Caco-2 (cell line): ENCODE measurements at regions of chr17 and their contacts with region 1.

Region 1: DNA sequence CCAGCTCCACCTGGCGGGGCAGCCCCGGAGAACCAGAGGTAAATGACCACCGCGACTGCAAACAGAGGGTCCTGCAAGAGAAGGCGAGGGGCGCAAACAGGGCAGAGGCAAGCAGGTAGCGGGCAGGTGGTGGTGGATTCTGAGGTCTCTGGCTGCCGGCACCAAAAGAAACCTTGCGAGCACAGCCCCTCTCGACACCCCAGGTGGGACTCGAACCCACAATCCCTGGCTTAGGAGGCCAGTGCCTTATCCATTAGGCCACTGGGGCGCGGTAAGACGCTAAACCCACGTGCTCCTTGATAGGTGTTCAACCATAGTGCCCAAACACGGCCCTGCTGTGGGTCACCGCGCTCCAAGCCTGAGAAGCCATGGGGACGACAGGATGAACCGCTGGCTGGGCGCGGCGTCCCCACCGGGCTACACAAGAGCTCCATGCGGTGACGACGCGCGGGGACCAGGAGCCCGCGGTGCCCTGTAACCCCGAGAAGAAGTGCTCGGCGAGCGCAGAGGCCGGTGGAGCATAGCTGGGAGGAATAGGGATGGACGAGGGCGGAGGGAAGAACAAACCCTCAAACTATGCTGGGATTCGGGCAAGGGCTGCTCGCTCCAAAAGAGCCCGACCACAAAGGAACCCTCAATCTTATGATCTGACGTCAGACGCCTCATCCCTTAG is 12.4 kb downstream of the ATP5PD start:
- DNase-seq: peak; percentile 95 to 96
- H3K4me3 ChIP-seq: peak overlapping the region; percentile 91
- H3K4me3 Mint-ChIP-seq: peak overlapping the region; percentile 94
- H3K27ac Mint-ChIP-seq: peak overlapping the region; percentile 98
- H3K4me1 ChIP-seq: no peaks in the 10 kb centered on the region
- H3K4me1 Mint-ChIP-seq: peaks cover 30% of the 10 kb centered on the region
- H3K27me3 ChIP-seq: no peaks in the 10 kb centered on the region
- H3K27me3 Mint-ChIP-seq: peaks cover 4% of the 10 kb centered on the region
- CTCF ChIP-seq: peak; percentile 14 to 17

Region 2: GRCh38 chr17:75012346-75013091 is 21.9 kb before region 1 on chr17 and contains the start of gene MRPL58:
- CTCF ChIA-PET with region 1: interaction called, 21 read pairs
- POLR2A ChIA-PET with region 1: interaction called, 29 read pairs
- intact Hi-C with region 1: loop called (anchors 2 kb)
- DNase-seq: peak; percentile 88 to 92
- H3K4me3 ChIP-seq: peak within 1 kb of the TSS; percentile 84
- H3K4me3 Mint-ChIP-seq: peak within 1 kb of the TSS; percentile 82
- H3K27ac Mint-ChIP-seq: peak within 1 kb of the TSS; percentile 84
- H3K4me1 ChIP-seq: peaks cover 3% of the 10 kb centered on the region; the same call in 1 of the 2 replicates
- H3K4me1 Mint-ChIP-seq: peaks cover 29% of the 10 kb centered on the region
- H3K27me3 ChIP-seq: no peaks in the 10 kb centered on the region
- H3K27me3 Mint-ChIP-seq: no peaks in the 10 kb centered on the region
- CTCF ChIP-seq: peak; percentile 68 to 79
- total RNA-seq, gene MRPL58: 61.0 and 61.8 TPM in 2 replicates

Region 3: DNA sequence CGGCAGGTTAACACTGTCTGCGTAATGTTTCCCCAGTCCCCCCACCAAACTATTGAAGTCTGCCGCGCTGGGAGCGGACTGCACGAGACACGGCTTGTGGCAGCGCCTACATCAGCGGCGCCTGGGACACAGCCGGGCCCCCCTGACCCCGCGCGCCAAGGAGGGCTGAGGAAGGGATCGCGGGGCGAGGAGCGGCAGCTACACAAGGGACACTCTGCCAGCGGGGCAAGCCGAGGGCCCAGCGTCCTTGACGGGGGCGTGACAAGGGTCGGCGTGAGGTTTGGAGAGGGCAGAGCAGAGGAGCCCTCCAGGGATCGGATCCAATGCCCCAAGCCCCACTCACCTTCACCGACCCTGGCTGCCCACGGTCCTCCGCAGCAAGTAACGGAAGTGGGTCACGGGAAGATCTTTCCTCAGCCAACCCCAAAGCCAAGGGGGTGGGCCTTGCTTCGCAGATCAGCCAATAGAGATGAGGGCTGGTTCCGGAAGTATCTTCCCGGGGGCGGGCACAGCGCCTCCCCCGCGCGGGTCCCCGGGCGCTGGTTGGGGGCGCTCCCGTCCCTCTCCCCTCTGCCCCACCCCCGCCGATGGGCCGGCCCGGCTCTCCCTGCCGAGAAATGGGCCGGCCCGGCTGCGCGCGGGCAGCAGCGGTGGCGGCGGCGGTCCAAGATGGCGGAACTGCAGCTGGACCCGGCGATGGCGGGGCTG is 12.4 kb after region 1 on chr17 and contains the starts of genes ATP5PD and KCTD2:
- CTCF ChIA-PET with region 1: interaction called, 5 read pairs
- POLR2A ChIA-PET with region 1: interaction called, 20 read pairs
- intact Hi-C with region 1: loop called (anchors 1 kb)
- DNase-seq: peak; percentile 98 to 99
- H3K4me3 ChIP-seq: peak within 1 kb of the TSS; percentile 60
- H3K4me3 Mint-ChIP-seq: peak within 1 kb of the TSS; percentile 95
- H3K27ac Mint-ChIP-seq: peak within 1 kb of the TSS; percentile 98
- H3K4me1 ChIP-seq: peaks cover 7% of the 10 kb centered on the region; the same call in 1 of the 2 replicates
- H3K4me1 Mint-ChIP-seq: no peaks in the 10 kb centered on the region
- H3K27me3 ChIP-seq: no peaks in the 10 kb centered on the region
- H3K27me3 Mint-ChIP-seq: no peaks in the 10 kb centered on the region
- CTCF ChIP-seq: no peak
- total RNA-seq, gene ATP5PD: 316 and 326 TPM in 2 replicates
- total RNA-seq, gene KCTD2: 27.9 and 28.8 TPM in 2 replicates

Region 4: DNA sequence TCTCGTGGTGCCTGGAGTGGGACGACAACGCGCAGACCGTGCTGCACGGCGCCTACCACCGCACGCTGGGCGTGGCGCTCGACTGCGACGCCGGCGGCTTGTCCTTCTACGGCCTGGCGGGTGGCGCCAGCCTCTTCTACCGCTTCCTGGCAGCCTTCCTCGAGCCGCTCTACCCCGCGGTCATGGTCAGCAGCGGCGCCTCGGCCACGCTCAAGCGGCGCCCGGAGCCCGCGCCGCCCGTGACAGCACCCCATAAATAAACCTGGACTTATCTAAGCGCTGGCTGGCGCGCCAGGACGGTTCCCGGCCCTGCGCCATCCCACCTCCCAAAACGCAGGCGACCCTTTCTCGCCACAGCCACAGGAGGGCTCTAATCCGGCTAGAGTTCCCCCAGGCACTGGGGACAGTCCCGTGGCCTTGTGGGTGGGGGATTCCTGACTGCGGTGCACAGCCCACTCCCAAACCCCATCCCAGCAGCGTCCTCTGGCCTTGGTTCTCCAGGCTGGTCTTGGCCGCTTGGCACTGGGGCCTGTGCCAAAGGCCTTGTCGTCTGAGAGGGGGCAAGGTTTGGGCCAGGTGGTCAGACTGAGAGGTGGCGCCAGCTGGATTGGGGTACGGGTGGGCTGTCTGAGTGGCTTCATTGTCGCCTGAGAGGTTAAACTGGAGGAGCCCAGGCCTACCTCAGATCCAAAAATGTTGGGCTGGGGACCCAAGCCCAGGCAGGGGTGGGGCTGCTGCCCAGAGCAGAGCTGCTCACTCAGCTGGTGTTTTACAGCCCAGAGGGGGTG is 43.3 kb after region 1 on chr17:
- CTCF ChIA-PET with region 1: interaction called, 5 read pairs
- POLR2A ChIA-PET with region 1: interaction called, 11 read pairs
- intact Hi-C with region 1: loop called (anchors 2 kb)
- DNase-seq: peak; percentile 77 to 79
- H3K4me3 ChIP-seq: peak overlapping the region; percentile 54
- H3K4me3 Mint-ChIP-seq: peak overlapping the region; percentile 95
- H3K27ac Mint-ChIP-seq: peak overlapping the region; percentile 93
- H3K4me1 ChIP-seq: peaks cover 32% of the 10 kb centered on the region
- H3K4me1 Mint-ChIP-seq: peaks cover 22% of the 10 kb centered on the region
- H3K27me3 ChIP-seq: no peaks in the 10 kb centered on the region
- H3K27me3 Mint-ChIP-seq: no peaks in the 10 kb centered on the region
- CTCF ChIP-seq: peak in 1 of 2 experiments; percentile 55

Region 5: GRCh38 chr17:75087558-75088453 is 53.4 kb after region 1 on chr17 and contains the start of gene SLC16A5:
- CTCF ChIA-PET with region 1: interaction called, 8 read pairs
- POLR2A ChIA-PET with region 1: interaction called, 12 read pairs
- intact Hi-C with region 1: no loop called
- DNase-seq: peak; percentile 99
- H3K4me3 ChIP-seq: peak within 1 kb of the TSS; percentile 74
- H3K4me3 Mint-ChIP-seq: peak within 1 kb of the TSS; percentile 92
- H3K27ac Mint-ChIP-seq: peak within 1 kb of the TSS; percentile 92
- H3K4me1 ChIP-seq: peaks cover 54% of the 10 kb centered on the region
- H3K4me1 Mint-ChIP-seq: peaks cover 57% of the 10 kb centered on the region
- H3K27me3 ChIP-seq: no peaks in the 10 kb centered on the region
- H3K27me3 Mint-ChIP-seq: no peaks in the 10 kb centered on the region
- CTCF ChIP-seq: no peak
- total RNA-seq, gene SLC16A5: 27.7 and 33.8 TPM in 2 replicates

Region 6: DNA sequence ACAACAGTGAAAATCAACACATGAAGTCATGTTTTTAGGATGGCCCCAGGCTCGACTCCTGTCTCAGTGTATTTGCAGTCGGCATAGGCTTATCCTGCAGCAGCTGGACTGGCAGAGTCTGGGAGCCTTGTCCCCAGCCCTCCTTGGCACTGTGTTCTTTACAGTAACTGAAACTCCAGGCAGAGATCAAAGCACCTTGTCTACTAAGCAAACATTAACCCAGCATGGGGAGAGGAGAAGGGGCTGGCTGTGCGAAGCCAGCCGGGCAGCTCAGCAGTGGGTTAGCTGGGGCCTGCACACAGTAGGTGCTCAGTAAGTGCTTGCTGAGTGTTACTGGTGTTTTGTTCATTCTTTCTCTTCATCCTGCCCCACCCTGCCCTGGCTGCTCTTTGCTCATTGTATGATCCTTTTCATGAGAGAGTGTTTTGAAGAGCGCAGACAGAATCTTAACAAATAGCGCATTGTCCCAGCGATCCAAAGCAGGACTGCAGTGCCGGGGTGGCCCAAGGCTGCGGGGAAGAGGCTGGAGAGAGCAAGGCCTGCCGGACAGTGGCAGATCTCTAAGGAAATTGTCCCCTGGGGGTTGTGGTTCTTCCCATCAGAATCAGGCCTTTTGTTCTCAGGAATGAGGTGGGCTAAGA is 663.4 kb after region 1 on chr17:
- CTCF ChIA-PET with region 1: no interaction called
- POLR2A ChIA-PET with region 1: no interaction called
- intact Hi-C with region 1: no loop called
- DNase-seq: no peak
- H3K4me3 ChIP-seq: no peak overlapping the region
- H3K4me3 Mint-ChIP-seq: no peak overlapping the region
- H3K27ac Mint-ChIP-seq: peak overlapping the region; percentile 22
- H3K4me1 ChIP-seq: peaks cover 35% of the 10 kb centered on the region
- H3K4me1 Mint-ChIP-seq: peaks cover 38% of the 10 kb centered on the region
- H3K27me3 ChIP-seq: no peaks in the 10 kb centered on the region
- H3K27me3 Mint-ChIP-seq: no peaks in the 10 kb centered on the region
- CTCF ChIP-seq: no peak